Stomach (tissue), 19 donors: ENCODE measurements at regions of chr7 and their contacts with region 1.

Region 1: GRCh38 chr7:131931370-131931769 is 374.9 kb upstream of the PODXL start:
- DNase-seq: no peak
- H3K4me3 ChIP-seq: no peak overlapping the region
- H3K27ac ChIP-seq: no peak overlapping the region
- H3K4me1 ChIP-seq: no peaks in the 10 kb centered on the region
- H3K27me3 ChIP-seq: peaks cover 0 to 15% (median 0%) of the 10 kb centered on the region in 3 donors
- CTCF ChIP-seq: no peak
- EP300 ChIP-seq: no peak
- POLR2A ChIP-seq: no peak

Region 2: GRCh38 chr7:132203021-132203420 is 271.7 kb after region 1 on chr7:
- intact Hi-C with region 1: no loop called
- DNase-seq: no peak
- H3K4me3 ChIP-seq: no peak overlapping the region
- H3K27ac ChIP-seq: no peak overlapping the region
- H3K4me1 ChIP-seq: no peaks in the 10 kb centered on the region
- H3K27me3 ChIP-seq: no peaks in the 10 kb centered on the region
- CTCF ChIP-seq: no peak
- EP300 ChIP-seq: no peak
- POLR2A ChIP-seq: no peak

Region 3: DNA sequence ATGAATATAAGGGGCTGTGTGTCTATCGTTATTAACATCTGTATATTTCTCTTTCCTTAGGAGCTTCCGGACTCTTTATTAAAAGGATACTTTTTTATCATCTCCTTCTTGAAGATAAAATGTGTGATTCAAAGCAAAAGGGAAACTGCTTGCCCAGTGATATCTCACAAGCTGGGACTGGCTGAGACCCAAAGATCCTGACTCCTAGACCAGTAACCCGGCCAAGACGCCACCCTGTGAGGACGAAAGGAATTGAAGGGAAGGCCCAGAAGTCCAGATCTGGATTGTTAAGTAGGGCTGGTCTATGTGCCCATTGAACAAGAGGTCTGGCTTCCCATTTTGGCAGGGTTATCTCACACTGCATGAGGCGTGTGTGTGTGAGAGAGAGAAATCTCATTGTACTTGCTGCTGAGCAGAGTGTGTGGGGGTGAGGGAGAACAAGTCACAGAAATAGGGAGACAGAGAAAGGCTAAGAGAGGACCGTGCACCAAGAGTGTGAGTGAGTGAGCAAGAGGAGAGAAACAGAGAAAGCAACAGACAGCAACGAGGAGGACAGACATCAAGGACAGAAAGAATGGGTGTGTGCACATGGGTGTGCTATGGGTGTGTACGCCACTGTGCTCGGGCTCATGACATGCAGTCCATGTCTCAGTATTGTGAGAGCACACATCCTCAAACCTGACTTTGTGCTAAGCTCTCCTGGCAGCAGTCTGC is 569.5 kb after region 1 on chr7:
- intact Hi-C with region 1: loop called (anchors 10 kb)
- DNase-seq: peak; percentile 64 to 80
- H3K4me3 ChIP-seq: no peak overlapping the region
- H3K27ac ChIP-seq: no peak overlapping the region
- H3K4me1 ChIP-seq: peaks cover 0 to 31% (median 4%) of the 10 kb centered on the region in 4 donors
- H3K27me3 ChIP-seq: no peaks in the 10 kb centered on the region
- CTCF ChIP-seq: peak in 5 of 7 experiments; percentile 39 to 54 (median 50)
- EP300 ChIP-seq: no peak
- POLR2A ChIP-seq: no peak